Caco-2 (cell line): ENCODE measurements at regions of chr14 and their contacts with region 1.

Region 1: DNA sequence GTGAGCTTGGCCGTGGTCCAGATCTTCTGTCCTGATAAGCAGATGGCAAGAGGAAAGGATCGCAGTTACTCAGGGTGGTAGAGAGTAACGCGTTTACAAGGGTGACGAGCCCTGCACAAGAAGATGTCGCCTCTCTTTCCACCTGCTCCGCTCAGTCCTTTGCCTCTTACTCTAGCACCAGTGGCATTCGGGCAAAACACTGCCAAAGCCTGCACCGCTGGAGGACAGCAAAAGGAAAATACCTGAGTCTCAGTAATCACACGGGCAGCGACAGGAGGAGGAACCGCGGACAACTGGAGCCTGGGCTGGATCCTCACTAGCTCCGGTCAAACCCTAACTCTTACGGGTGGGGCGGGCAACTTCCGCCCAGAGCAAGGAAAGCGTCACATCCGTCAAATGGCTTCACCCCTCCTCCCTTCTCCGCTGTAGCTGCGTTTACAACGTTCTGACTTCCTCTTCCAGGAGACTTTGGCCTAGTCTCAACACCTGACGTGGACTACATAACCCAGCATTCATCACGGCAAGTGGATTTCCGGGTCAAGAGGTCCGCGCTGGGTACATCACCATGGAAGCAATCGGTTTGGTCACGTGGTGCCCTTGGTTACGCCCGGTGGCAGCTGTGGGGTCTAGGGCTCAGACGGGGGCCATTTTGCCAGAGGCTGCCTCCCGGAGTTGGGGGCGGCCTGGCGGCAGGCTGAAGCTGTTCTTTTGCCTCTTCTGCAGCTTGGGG is at the starts of genes KLHL28 and TOGARAM1:
- DNase-seq: peak; percentile 90 to 95
- H3K4me3 ChIP-seq: peak within 1 kb of the TSS; percentile 63
- H3K4me3 Mint-ChIP-seq: no peak within 1 kb of the TSS
- H3K27ac Mint-ChIP-seq: no peak within 1 kb of the TSS
- H3K4me1 ChIP-seq: no peaks in the 10 kb centered on the region
- H3K4me1 Mint-ChIP-seq: peaks cover 8% of the 10 kb centered on the region
- H3K27me3 ChIP-seq: no peaks in the 10 kb centered on the region
- H3K27me3 Mint-ChIP-seq: no peaks in the 10 kb centered on the region
- CTCF ChIP-seq: no peak
- total RNA-seq, gene KLHL28: 3.6 and 4.7 TPM in 2 replicates
- total RNA-seq, gene TOGARAM1: 5.9 and 7.1 TPM in 2 replicates

Region 2: GRCh38 chr14:44795725-44796124 is 166.0 kb before region 1 on chr14:
- CTCF ChIA-PET with region 1: no interaction called
- POLR2A ChIA-PET with region 1: no interaction called
- intact Hi-C with region 1: no loop called
- DNase-seq: no peak
- H3K4me3 ChIP-seq: no peak overlapping the region
- H3K4me3 Mint-ChIP-seq: no peak overlapping the region
- H3K27ac Mint-ChIP-seq: no peak overlapping the region
- H3K4me1 ChIP-seq: no peaks in the 10 kb centered on the region
- H3K4me1 Mint-ChIP-seq: no peaks in the 10 kb centered on the region
- H3K27me3 ChIP-seq: no peaks in the 10 kb centered on the region
- H3K27me3 Mint-ChIP-seq: no peaks in the 10 kb centered on the region
- CTCF ChIP-seq: no peak

Region 3: GRCh38 chr14:45034730-45035129 is 73.0 kb after region 1 on chr14:
- CTCF ChIA-PET with region 1: no interaction called
- POLR2A ChIA-PET with region 1: no interaction called
- intact Hi-C with region 1: no loop called
- DNase-seq: no peak
- H3K4me3 ChIP-seq: no peak overlapping the region
- H3K4me3 Mint-ChIP-seq: no peak overlapping the region
- H3K27ac Mint-ChIP-seq: no peak overlapping the region
- H3K4me1 ChIP-seq: no peaks in the 10 kb centered on the region
- H3K4me1 Mint-ChIP-seq: no peaks in the 10 kb centered on the region
- H3K27me3 ChIP-seq: no peaks in the 10 kb centered on the region
- H3K27me3 Mint-ChIP-seq: no peaks in the 10 kb centered on the region
- CTCF ChIP-seq: no peak

Region 4: GRCh38 chr14:45083971-45084722 is 122.4 kb after region 1 on chr14 and contains the start of gene PRPF39:
- CTCF ChIA-PET with region 1: no interaction called
- POLR2A ChIA-PET with region 1: no interaction called
- intact Hi-C with region 1: loop called (anchors 5 kb)
- DNase-seq: peak; percentile 87 to 91
- H3K4me3 ChIP-seq: peak within 1 kb of the TSS; percentile 49
- H3K4me3 Mint-ChIP-seq: peak within 1 kb of the TSS; percentile 85
- H3K27ac Mint-ChIP-seq: peak within 1 kb of the TSS; percentile 87
- H3K4me1 ChIP-seq: no peaks in the 10 kb centered on the region
- H3K4me1 Mint-ChIP-seq: peaks cover 17% of the 10 kb centered on the region
- H3K27me3 ChIP-seq: no peaks in the 10 kb centered on the region
- H3K27me3 Mint-ChIP-seq: no peaks in the 10 kb centered on the region
- CTCF ChIP-seq: no peak
- total RNA-seq, gene PRPF39: 22.3 and 30.0 TPM in 2 replicates

Region 5: GRCh38 chr14:45587142-45587541 is 625.4 kb after region 1 on chr14:
- CTCF ChIA-PET with region 1: no interaction called
- POLR2A ChIA-PET with region 1: no interaction called
- intact Hi-C with region 1: no loop called
- DNase-seq: no peak
- H3K4me3 ChIP-seq: no peak overlapping the region
- H3K4me3 Mint-ChIP-seq: no peak overlapping the region
- H3K27ac Mint-ChIP-seq: no peak overlapping the region
- H3K4me1 ChIP-seq: no peaks in the 10 kb centered on the region
- H3K4me1 Mint-ChIP-seq: no peaks in the 10 kb centered on the region
- H3K27me3 ChIP-seq: no peaks in the 10 kb centered on the region
- H3K27me3 Mint-ChIP-seq: no peaks in the 10 kb centered on the region
- CTCF ChIP-seq: no peak